Activated CD4-positive, alpha-beta T cell treated with anti-CD3 and anti-CD28 coated beads for 36 hours (primary cell): ENCODE measurements at regions of chr17 and their contacts with region 1.

Region 1: GRCh38 chr17:64129764-64130558 is at the start of gene ERN1:
- DNase-seq: peak; percentile 97
- ATAC-seq: peak; percentile 84
- H3K4me3 Mint-ChIP-seq: peak within 1 kb of the TSS; percentile 87
- H3K27ac Mint-ChIP-seq: peak within 1 kb of the TSS; percentile 96
- H3K4me1 Mint-ChIP-seq: peaks cover 54% of the 10 kb centered on the region
- H3K27me3 Mint-ChIP-seq: no peaks in the 10 kb centered on the region
- total RNA-seq, gene ERN1: 23.7 to 26.8 TPM

Region 2: DNA sequence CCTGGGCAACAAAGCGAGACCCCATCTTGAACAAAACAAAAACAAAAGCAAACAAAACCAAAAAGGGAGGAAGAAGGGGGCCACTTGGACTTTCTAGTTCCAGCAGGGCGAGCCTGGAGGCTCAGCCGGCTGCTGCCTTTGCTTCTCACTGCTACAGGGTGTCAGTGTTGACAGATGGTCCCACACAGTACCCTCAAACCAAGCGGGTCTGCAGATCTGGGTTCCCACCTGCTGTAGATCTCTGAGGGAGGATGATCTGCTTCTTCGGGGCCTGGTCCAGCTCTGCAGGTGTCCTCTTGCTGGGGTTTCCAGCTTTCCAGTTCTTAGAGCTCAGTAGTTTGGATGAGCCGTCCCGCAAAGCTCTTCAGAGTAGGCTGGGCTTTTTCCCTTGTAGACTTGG is 225.6 kb before region 1 on chr17:
- CTCF ChIA-PET with region 1: interaction called, 10 read pairs
- POLR2A ChIA-PET with region 1: no interaction called
- intact Hi-C with region 1: no loop called
- DNase-seq: no peak
- ATAC-seq: no peak
- H3K4me3 Mint-ChIP-seq: no peak overlapping the region
- H3K27ac Mint-ChIP-seq: no peak overlapping the region
- H3K4me1 Mint-ChIP-seq: peaks cover 12% of the 10 kb centered on the region
- H3K27me3 Mint-ChIP-seq: peaks cover 7% of the 10 kb centered on the region

Region 3: GRCh38 chr17:64020056-64020766 is 109.8 kb before region 1 on chr17 and contains the start of gene ICAM2:
- CTCF ChIA-PET with region 1: interaction called, 362 read pairs
- POLR2A ChIA-PET with region 1: interaction called, 12 read pairs
- intact Hi-C with region 1: loop called (anchors 1 to 2 kb)
- DNase-seq: peak; percentile 92
- ATAC-seq: peak; percentile 73
- H3K4me3 Mint-ChIP-seq: peak within 1 kb of the TSS; percentile 84
- H3K27ac Mint-ChIP-seq: peak within 1 kb of the TSS; percentile 97
- H3K4me1 Mint-ChIP-seq: peaks cover 68% of the 10 kb centered on the region
- H3K27me3 Mint-ChIP-seq: no peaks in the 10 kb centered on the region
- total RNA-seq, gene ICAM2: 46.6 to 49.0 TPM

Region 4: DNA sequence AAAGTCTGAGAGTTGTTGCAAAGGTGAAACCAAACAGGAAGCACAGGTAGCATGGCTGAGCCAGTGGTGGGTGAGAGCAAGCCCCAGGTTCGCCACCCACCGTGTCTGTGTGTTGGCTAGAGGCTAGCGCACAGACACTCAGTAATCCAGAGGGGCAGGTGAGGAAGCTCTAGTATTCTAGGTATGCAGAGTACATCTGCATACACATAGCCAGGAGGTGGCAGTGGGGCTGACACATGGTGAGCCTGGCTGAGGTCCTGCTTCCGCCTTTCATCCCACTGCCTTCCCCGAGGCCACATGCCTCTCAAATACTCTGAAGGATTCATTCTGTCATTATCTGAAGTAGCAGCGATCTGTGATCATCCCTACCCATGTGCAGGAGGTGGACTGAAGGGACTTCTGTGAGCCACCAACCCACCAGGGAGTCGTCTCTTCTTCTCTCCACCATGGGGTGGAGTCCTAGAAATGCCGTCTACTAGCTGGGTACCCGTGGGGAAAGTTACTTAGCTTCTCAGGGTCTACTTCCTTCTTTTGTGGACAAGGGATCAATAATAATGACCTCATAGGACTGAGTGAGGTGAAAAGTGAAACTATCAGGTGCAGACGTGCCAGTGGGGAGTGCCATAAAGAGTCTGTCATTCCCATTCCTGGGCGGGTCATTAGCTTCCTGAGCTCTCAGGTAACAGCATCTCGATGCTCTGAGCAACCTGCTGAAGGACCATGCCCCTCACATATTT is 73.5 kb before region 1 on chr17:
- CTCF ChIA-PET with region 1: interaction called, 172 read pairs
- POLR2A ChIA-PET with region 1: no interaction called
- intact Hi-C with region 1: loop called in 1 of 2 experiments (anchors 1 kb)
- DNase-seq: no peak
- ATAC-seq: no peak
- H3K4me3 Mint-ChIP-seq: no peak overlapping the region
- H3K27ac Mint-ChIP-seq: peak overlapping the region; percentile 64
- H3K4me1 Mint-ChIP-seq: peaks cover 41% of the 10 kb centered on the region
- H3K27me3 Mint-ChIP-seq: no peaks in the 10 kb centered on the region

Region 5: DNA sequence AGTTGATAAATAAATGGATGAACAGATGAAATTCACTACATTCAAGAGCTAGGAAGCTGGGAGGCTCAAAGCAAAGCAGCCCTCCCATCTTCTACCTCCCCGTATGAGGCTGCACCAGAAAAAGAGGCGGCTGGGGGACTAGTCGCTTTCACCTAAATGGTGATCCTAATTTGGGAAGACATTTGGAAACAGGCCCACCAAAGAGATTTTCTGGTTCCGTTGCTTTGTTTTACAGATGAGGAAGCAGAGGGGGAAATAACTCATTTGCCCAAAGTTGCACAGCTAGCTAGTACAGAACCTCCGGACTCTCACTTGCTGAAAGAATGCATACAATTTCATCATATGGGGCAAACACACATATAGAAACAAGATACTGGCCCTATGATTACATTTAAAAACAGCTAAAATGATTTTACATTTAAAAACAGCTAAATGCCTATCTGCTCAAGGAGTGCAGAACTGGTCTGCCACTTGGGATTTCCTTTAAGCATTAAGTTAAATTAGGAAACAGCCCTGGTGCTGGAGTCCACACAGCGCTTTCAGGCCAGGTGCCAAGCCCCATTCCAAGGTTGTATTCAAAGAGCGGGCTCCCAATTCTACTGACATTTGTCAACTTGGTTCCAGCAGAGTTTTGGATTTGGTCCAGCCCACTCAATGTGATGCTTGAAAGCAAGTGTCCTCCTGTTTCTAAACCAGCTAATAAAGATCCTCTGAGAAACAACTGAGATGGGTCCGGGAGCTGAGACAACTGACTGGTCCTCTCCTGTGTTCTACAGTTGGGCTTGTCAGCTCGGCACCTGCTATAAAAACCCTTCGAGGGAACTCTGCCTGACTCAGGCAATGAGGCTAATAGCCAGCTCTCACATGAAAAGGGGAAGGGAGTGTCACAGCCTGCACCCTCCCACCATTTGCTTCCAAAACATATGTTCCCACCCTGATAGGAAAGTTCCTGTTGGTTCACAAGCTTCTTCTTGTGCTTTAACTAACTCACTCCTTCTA is 11.7 kb before region 1 on chr17:
- CTCF ChIA-PET with region 1: interaction called, 32 read pairs
- POLR2A ChIA-PET with region 1: interaction called, 7 read pairs
- intact Hi-C with region 1: loop called in 1 of 2 experiments (anchors 1 kb)
- DNase-seq: no peak
- ATAC-seq: no peak
- H3K4me3 Mint-ChIP-seq: no peak overlapping the region
- H3K27ac Mint-ChIP-seq: peak overlapping the region; percentile 83
- H3K4me1 Mint-ChIP-seq: peaks cover 82% of the 10 kb centered on the region
- H3K27me3 Mint-ChIP-seq: no peaks in the 10 kb centered on the region

Region 6: GRCh38 chr17:64291254-64291851 is 161.4 kb after region 1 on chr17:
- CTCF ChIA-PET with region 1: interaction called, 17 read pairs
- POLR2A ChIA-PET with region 1: no interaction called
- intact Hi-C with region 1: no loop called
- DNase-seq: peak; percentile 23
- ATAC-seq: no peak
- H3K4me3 Mint-ChIP-seq: no peak overlapping the region
- H3K27ac Mint-ChIP-seq: no peak overlapping the region
- H3K4me1 Mint-ChIP-seq: no peaks in the 10 kb centered on the region
- H3K27me3 Mint-ChIP-seq: no peaks in the 10 kb centered on the region